ENCODE measurements at regions of chr11 and their contacts with region 1.

Region 1: GRCh38 chr11:126480410-126481302 is 125.2 kb downstream of the ST3GAL4 start:
- DNase-seq: peak; percentile 82
- ATAC-seq: peak; percentile 77
- H3K4me3 Mint-ChIP-seq: peak overlapping the region; percentile 26
- H3K27ac Mint-ChIP-seq: peak overlapping the region; percentile 82
- H3K4me1 Mint-ChIP-seq: peaks cover 22% of the 10 kb centered on the region
- H3K27me3 Mint-ChIP-seq: peaks cover 4% of the 10 kb centered on the region

Region 2: GRCh38 chr11:126303623-126304456 is 176.8 kb before region 1 on chr11 and contains the start of gene DCPS:
- CTCF ChIA-PET with region 1: interaction called, 80 read pairs
- POLR2A ChIA-PET with region 1: no interaction called
- DNase-seq: peak; percentile 88
- ATAC-seq: peak; percentile 99
- H3K4me3 Mint-ChIP-seq: peak within 1 kb of the TSS; percentile 81
- H3K27ac Mint-ChIP-seq: peak within 1 kb of the TSS; percentile 97
- H3K4me1 Mint-ChIP-seq: peaks cover 33% of the 10 kb centered on the region
- H3K27me3 Mint-ChIP-seq: no peaks in the 10 kb centered on the region
- total RNA-seq, gene DCPS: 21.8 to 22.5 TPM

Region 3: DNA sequence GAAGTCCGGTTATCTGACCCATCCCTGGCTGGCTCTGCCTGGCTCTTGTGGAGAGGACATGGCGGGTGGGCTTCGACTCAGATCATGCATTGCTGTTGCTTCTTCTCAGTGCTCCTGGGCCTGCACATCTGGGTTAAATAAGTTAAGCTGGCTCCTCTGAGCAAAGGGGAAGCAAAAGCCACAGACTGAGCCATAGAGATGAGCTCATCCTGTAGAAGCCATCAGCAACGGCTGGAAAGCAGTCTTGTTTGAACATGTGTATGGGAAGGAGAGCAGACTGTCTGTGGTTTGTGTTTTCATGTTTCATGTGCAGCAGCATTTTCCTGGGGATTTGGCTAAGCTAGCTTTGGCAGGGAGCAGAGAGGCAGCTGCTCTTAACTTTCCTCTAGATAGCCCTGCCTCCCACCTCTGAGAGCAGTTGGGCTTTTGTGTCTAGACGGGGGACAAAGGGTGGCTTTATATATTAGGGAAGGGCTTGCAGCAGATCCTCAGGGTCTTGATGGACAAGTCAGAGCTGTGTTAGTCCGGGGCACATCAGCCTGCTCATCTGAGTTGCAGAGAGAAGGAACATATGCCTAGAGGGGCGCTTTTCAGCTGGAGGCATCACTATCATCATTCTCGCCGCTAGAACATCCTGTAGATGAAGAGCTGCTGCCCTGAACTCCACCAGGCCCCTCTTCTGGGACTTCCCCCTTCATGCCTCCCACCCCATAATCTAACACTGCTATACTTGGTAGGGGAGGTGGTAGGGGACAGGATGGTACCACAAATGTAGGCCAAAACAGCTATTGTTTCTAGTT is 161.9 kb before region 1 on chr11:
- CTCF ChIA-PET with region 1: interaction called, 33 read pairs
- POLR2A ChIA-PET with region 1: interaction called, 3 read pairs
- DNase-seq: peak; percentile 61
- ATAC-seq: peak; percentile 85
- H3K4me3 Mint-ChIP-seq: peak overlapping the region; percentile 65
- H3K27ac Mint-ChIP-seq: peak overlapping the region; percentile 95
- H3K4me1 Mint-ChIP-seq: peaks cover 37% of the 10 kb centered on the region
- H3K27me3 Mint-ChIP-seq: no peaks in the 10 kb centered on the region

Region 4: GRCh38 chr11:126419801-126420697 is 60.6 kb before region 1 on chr11:
- CTCF ChIA-PET with region 1: interaction called, 14 read pairs
- POLR2A ChIA-PET with region 1: no interaction called
- DNase-seq: no peak
- ATAC-seq: no peak
- H3K4me3 Mint-ChIP-seq: no peak overlapping the region
- H3K27ac Mint-ChIP-seq: no peak overlapping the region
- H3K4me1 Mint-ChIP-seq: peaks cover 21% of the 10 kb centered on the region
- H3K27me3 Mint-ChIP-seq: peaks cover 8% of the 10 kb centered on the region

Region 5: DNA sequence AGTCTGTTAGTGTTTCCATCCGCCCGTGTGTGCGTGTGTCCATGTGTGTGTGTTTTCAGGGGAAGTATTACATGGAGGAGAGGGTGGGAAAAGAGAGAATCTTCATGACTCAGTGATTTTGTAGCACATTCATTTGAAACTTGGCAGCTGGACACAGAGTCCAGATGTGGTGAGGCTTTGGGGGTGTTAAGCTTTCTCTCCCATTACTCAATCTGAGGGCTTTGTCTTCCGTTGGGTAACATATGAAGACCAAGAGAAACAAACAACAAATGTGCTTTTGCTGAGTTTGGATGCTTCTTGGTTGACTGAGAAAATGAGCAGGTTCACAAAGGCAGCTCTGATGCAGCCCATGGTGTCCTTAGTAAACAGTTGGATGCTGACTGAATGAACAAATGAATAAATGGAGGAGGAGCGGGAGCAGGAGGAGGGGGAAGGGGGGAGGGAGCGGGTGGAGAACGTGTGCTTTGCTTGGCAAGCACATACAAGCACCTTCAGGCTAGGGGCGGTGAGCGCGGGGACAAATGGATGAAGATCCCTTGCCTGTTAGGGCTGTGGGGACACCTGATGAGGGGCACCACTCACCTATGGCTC is 20.9 kb before region 1 on chr11:
- CTCF ChIA-PET with region 1: interaction called, 84 read pairs
- POLR2A ChIA-PET with region 1: interaction called, 10 read pairs
- DNase-seq: no peak
- ATAC-seq: no peak
- H3K4me3 Mint-ChIP-seq: no peak overlapping the region
- H3K27ac Mint-ChIP-seq: no peak overlapping the region
- H3K4me1 Mint-ChIP-seq: peaks cover 6% of the 10 kb centered on the region
- H3K27me3 Mint-ChIP-seq: no peaks in the 10 kb centered on the region